CD4-positive, alpha-beta memory T cell (primary cell): ENCODE measurements at regions of chr6 and their contacts with region 1.

Region 1: GRCh38 chr6:104789770-104790190 is 69.9 kb downstream of the HACE1 start:
- DNase-seq: peak; percentile 45 to 72 (median 48)
- H3K4me3 ChIP-seq: no peak overlapping the region
- H3K4me3 Mint-ChIP-seq: peak overlapping the region in 7 of 8 donors; percentile 28 to 75 (median 58)
- H3K27ac ChIP-seq: no peak overlapping the region
- H3K27ac Mint-ChIP-seq: peak overlapping the region in 6 of 7 donors; percentile 1 to 89 (median 66)
- H3K4me1 ChIP-seq: peaks cover 25% of the 10 kb centered on the region
- H3K4me1 Mint-ChIP-seq: peaks cover 15 to 23% (median 20%) of the 10 kb centered on the region in 4 donors
- H3K27me3 ChIP-seq: no peaks in the 10 kb centered on the region
- H3K27me3 Mint-ChIP-seq: no peaks in the 10 kb centered on the region

Region 2: DNA sequence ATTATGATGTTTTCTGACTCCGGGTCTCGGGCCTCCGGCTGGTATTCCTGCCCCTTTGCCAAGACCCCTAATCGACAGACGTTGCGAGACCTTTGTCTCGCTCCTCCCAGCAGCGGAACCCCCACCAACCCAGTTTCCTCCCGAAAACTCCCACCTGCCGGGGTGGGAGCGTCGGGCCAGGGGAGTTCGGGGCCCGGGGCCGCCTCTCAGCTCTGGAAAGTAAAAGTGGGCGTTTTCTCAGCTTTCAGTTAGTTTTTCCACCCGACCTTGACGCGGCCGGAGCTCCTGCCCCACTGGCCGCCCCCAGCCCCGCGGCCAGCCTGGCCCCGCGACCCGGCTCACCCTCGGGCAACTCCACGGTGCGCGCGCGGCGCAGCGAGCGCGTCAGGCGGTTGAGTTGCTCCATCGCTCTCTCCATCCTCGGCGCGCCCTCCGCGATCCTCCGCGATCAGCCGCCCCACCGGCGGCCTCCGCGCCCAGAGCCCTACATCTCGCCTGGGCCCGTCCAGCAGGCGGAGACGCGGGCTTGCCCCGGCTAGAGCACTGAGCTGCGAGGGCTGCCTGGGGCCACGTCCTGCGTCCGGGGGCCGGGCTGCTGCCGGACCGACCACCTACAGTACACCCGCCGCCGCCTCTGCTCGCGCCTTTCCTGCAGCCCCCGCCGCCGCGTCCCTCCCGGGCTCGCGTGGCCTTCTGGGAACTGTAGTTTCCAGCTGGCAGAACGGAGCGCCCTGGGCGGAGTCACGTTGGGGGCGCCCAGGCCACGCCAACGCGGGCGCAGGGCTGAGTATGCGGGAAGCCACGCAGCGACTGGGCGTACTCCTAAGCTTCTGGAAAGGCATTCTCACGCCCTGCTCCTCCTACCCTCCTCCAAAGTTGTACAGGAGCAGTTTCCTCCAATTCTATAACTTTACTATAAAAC is 69.7 kb after region 1 on chr6 and contains the start of gene HACE1:
- CTCF ChIA-PET with region 1: interaction called, 6 read pairs
- POLR2A ChIA-PET with region 1: no interaction called
- intact Hi-C with region 1: loop called (anchors 2 kb)
- DNase-seq: peak; percentile 86 to 90 (median 89)
- H3K4me3 ChIP-seq: peak within 1 kb of the TSS; percentile 48 to 94
- H3K4me3 Mint-ChIP-seq: peak within 1 kb of the TSS; percentile 90 to 95 (median 92)
- H3K27ac ChIP-seq: peak within 1 kb of the TSS; percentile 38
- H3K27ac Mint-ChIP-seq: peak within 1 kb of the TSS; percentile 66 to 89 (median 83)
- H3K4me1 ChIP-seq: peaks cover 14% of the 10 kb centered on the region
- H3K4me1 Mint-ChIP-seq: peaks cover 8 to 22% (median 16%) of the 10 kb centered on the region in 4 donors
- H3K27me3 ChIP-seq: no peaks in the 10 kb centered on the region
- H3K27me3 Mint-ChIP-seq: peaks cover 3 to 5% of the 10 kb centered on the region in 2 donors
- total RNA-seq, gene HACE1: 14.4 to 16.0 TPM

Region 3: GRCh38 chr6:105077596-105078385 is 288.0 kb after region 1 on chr6:
- CTCF ChIA-PET with region 1: interaction called, 18 read pairs
- POLR2A ChIA-PET with region 1: no interaction called
- intact Hi-C with region 1: loop called (anchors 1 kb)
- DNase-seq: peak in 2 of 5 donors; percentile 8 to 10
- H3K4me3 ChIP-seq: no peak overlapping the region
- H3K4me3 Mint-ChIP-seq: no peak overlapping the region
- H3K27ac ChIP-seq: no peak overlapping the region
- H3K27ac Mint-ChIP-seq: no peak overlapping the region
- H3K4me1 ChIP-seq: no peaks in the 10 kb centered on the region
- H3K4me1 Mint-ChIP-seq: no peaks in the 10 kb centered on the region
- H3K27me3 ChIP-seq: peaks cover 3% of the 10 kb centered on the region
- H3K27me3 Mint-ChIP-seq: peaks cover 0 to 8% of the 10 kb centered on the region in 2 donors